AG04450 (cell line): ENCODE measurements at regions of chr15 and their contacts with region 1.

Region 1: GRCh38 chr15:49155110-49155833 is at the start of gene COPS2:
- DNase-seq: peak; percentile 97
- H3K4me3 ChIP-seq: peak within 1 kb of the TSS; percentile 99
- H3K27ac ChIP-seq: peak within 1 kb of the TSS; percentile 58
- H3K27me3 ChIP-seq: no peaks in the 10 kb centered on the region
- CTCF ChIP-seq: no peak
- polyA plus RNA-seq, gene COPS2: 84.6 and 135 TPM in 2 replicates

Region 2: GRCh38 chr15:49036650-49037545 is 118.4 kb before region 1 on chr15:
- CTCF ChIA-PET with region 1: no interaction called
- POLR2A ChIA-PET with region 1: interaction called, 11 read pairs
- DNase-seq: peak; percentile 18
- H3K4me3 ChIP-seq: no peak overlapping the region
- H3K27ac ChIP-seq: no peak overlapping the region
- H3K27me3 ChIP-seq: no peaks in the 10 kb centered on the region
- CTCF ChIP-seq: no peak